Activated T-helper 1 cell treated with anti-CD3 and anti-CD28 coated beads, Interleukin-12 subunit alpha, Interleukin-12 subunit beta, Interleukin-2, Interleukin-4 antibody, amounts not matched to agents 30 ng/mL and 10 ng/mL and 1 ng/mL, durations not matched to agents 14 hours and 24 hours and 36 hours (primary cell): ENCODE measurements at regions of chr12 and their contacts with region 1.

Region 1: GRCh38 chr12:121688966-121689365 is 19.5 kb upstream of the MORN3 start:
- DNase-seq: no peak
- H3K4me3 Mint-ChIP-seq: no peak overlapping the region
- H3K27ac Mint-ChIP-seq: no peak overlapping the region
- H3K4me1 Mint-ChIP-seq: peaks cover 10% of the 10 kb centered on the region
- H3K27me3 Mint-ChIP-seq: peaks cover 7% of the 10 kb centered on the region

Region 2: GRCh38 chr12:121296618-121297434 is 392.1 kb before region 1 on chr12 and contains the start of gene CAMKK2:
- intact Hi-C with region 1: loop called (anchors 1 kb)
- DNase-seq: peak; percentile 91
- H3K4me3 Mint-ChIP-seq: peak within 1 kb of the TSS; percentile 94
- H3K27ac Mint-ChIP-seq: peak within 1 kb of the TSS; percentile 88
- H3K4me1 Mint-ChIP-seq: peaks cover 35% of the 10 kb centered on the region
- H3K27me3 Mint-ChIP-seq: no peaks in the 10 kb centered on the region
- total RNA-seq, gene CAMKK2: 38.1 and 41.0 TPM in 2 replicates

Region 3: GRCh38 chr12:121472150-121472905 is 216.6 kb before region 1 on chr12:
- intact Hi-C with region 1: no loop called
- DNase-seq: no peak
- H3K4me3 Mint-ChIP-seq: no peak overlapping the region
- H3K27ac Mint-ChIP-seq: no peak overlapping the region
- H3K4me1 Mint-ChIP-seq: peaks cover 13% of the 10 kb centered on the region
- H3K27me3 Mint-ChIP-seq: peaks cover 8% of the 10 kb centered on the region

Region 4: DNA sequence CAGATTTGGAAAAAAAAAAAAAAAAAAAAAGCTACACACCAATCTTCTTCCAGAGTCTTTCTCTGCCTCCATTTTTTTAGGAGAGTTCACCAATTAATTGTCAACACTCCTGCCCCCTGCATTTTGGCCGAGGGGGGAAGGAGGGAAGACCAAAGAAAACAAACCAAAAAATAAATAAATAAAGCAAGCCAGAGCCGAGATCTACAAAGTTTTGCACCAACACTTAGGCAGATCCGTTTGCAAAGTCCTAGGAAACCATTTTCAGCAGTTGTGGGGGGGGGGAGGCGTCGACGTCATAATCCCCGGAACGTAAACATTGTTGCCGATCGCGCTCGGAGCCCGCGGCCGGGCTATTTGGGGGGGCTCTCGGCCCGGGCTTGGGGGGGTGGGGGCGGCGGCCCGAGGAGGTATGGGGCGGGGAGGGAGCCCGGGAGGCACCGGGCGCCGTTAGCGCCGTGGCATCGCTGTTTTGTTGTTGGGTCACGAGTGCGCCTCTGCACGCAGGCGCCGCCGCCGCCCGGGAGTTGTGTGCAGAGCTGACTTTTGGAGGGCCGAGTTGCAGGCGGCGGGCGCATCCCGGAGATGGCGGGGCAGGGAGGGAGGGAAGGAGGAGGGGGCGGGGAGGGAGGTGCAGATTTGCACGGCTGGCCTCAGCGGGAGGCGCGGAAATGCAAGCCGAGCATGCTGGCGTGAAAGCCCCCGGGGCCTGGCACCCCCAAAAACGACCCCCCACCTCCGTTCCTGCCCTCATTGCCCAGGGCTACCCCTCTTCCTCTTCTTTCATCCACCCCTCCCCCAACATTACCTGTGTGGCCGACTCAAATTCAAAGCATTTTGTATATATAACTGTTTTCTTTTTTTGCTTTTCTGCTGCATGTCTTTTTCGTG is 108.7 kb before region 1 on chr12:
- intact Hi-C with region 1: loop called (anchors 1 kb)
- DNase-seq: peak; percentile 67
- H3K4me3 Mint-ChIP-seq: peak overlapping the region; percentile 98
- H3K27ac Mint-ChIP-seq: peak overlapping the region; percentile 100
- H3K4me1 Mint-ChIP-seq: peaks cover 40% of the 10 kb centered on the region
- H3K27me3 Mint-ChIP-seq: no peaks in the 10 kb centered on the region

Region 5: GRCh38 chr12:121590476-121591143 is 98.4 kb before region 1 on chr12:
- intact Hi-C with region 1: loop called (anchors 1 kb)
- DNase-seq: peak; percentile 64
- H3K4me3 Mint-ChIP-seq: peak overlapping the region; percentile 80
- H3K27ac Mint-ChIP-seq: peak overlapping the region; percentile 95
- H3K4me1 Mint-ChIP-seq: peaks cover 26% of the 10 kb centered on the region
- H3K27me3 Mint-ChIP-seq: no peaks in the 10 kb centered on the region

Region 6: GRCh38 chr12:121712461-121713256 is 23.7 kb after region 1 on chr12 and contains the start of gene TMEM120B:
- intact Hi-C with region 1: loop called (anchors 1 kb)
- DNase-seq: peak; percentile 83
- H3K4me3 Mint-ChIP-seq: peak within 1 kb of the TSS; percentile 97
- H3K27ac Mint-ChIP-seq: peak within 1 kb of the TSS; percentile 91
- H3K4me1 Mint-ChIP-seq: peaks cover 28% of the 10 kb centered on the region
- H3K27me3 Mint-ChIP-seq: peaks cover 4% of the 10 kb centered on the region
- total RNA-seq, gene TMEM120B: 17.5 and 18.3 TPM in 2 replicates